CD4-positive, alpha-beta memory T cell (primary cell): ENCODE measurements at regions of chr4 and their contacts with region 1.

Region 1: GRCh38 chr4:2934813-2935761 is 28.1 kb downstream of the NOP14 start:
- DNase-seq: peak; percentile 91 to 96 (median 94)
- H3K4me3 ChIP-seq: peak overlapping the region; percentile 91 to 92
- H3K4me3 Mint-ChIP-seq: peak overlapping the region; percentile 88 to 92 (median 89)
- H3K27ac ChIP-seq: peak overlapping the region; percentile 97
- H3K27ac Mint-ChIP-seq: peak overlapping the region; percentile 91 to 99 (median 95)
- H3K4me1 ChIP-seq: peaks cover 56% of the 10 kb centered on the region
- H3K4me1 Mint-ChIP-seq: peaks cover 35 to 62% (median 45%) of the 10 kb centered on the region in 4 donors
- H3K27me3 ChIP-seq: no peaks in the 10 kb centered on the region
- H3K27me3 Mint-ChIP-seq: no peaks in the 10 kb centered on the region

Region 2: GRCh38 chr4:2536193-2537010 is 398.7 kb before region 1 on chr4 and contains the start of gene FAM193A:
- CTCF ChIA-PET with region 1: no interaction called
- POLR2A ChIA-PET with region 1: interaction called, 3 read pairs
- intact Hi-C with region 1: loop called (anchors 10 kb)
- DNase-seq: peak; percentile 98 to 99 (median 99)
- H3K4me3 ChIP-seq: peak within 1 kb of the TSS; percentile 52 to 70
- H3K4me3 Mint-ChIP-seq: peak within 1 kb of the TSS; percentile 88 to 95 (median 92)
- H3K27ac ChIP-seq: peak within 1 kb of the TSS; percentile 83
- H3K27ac Mint-ChIP-seq: peak within 1 kb of the TSS; percentile 92 to 97 (median 94)
- H3K4me1 ChIP-seq: peaks cover 37% of the 10 kb centered on the region
- H3K4me1 Mint-ChIP-seq: peaks cover 10 to 44% (median 16%) of the 10 kb centered on the region in 4 donors
- H3K27me3 ChIP-seq: no peaks in the 10 kb centered on the region
- H3K27me3 Mint-ChIP-seq: no peaks in the 10 kb centered on the region
- total RNA-seq, gene FAM193A: 47.8 TPM

Region 3: GRCh38 chr4:2755837-2756694 is 179.0 kb before region 1 on chr4 and contains the start of gene TNIP2:
- CTCF ChIA-PET with region 1: interaction called, 3 read pairs
- POLR2A ChIA-PET with region 1: interaction called, 11 read pairs
- intact Hi-C with region 1: no loop called
- DNase-seq: peak; percentile 77 to 85 (median 81)
- H3K4me3 ChIP-seq: peak within 1 kb of the TSS; percentile 25 to 68
- H3K4me3 Mint-ChIP-seq: peak within 1 kb of the TSS; percentile 75 to 89 (median 86)
- H3K27ac ChIP-seq: peak within 1 kb of the TSS; percentile 83
- H3K27ac Mint-ChIP-seq: peak within 1 kb of the TSS; percentile 68 to 93 (median 85)
- H3K4me1 ChIP-seq: peaks cover 25% of the 10 kb centered on the region
- H3K4me1 Mint-ChIP-seq: peaks cover 18 to 39% (median 29%) of the 10 kb centered on the region in 4 donors
- H3K27me3 ChIP-seq: no peaks in the 10 kb centered on the region
- H3K27me3 Mint-ChIP-seq: no peaks in the 10 kb centered on the region
- total RNA-seq, gene TNIP2: 50.0 to 50.5 TPM

Region 4: GRCh38 chr4:2800691-2801596 is 134.1 kb before region 1 on chr4:
- CTCF ChIA-PET with region 1: no interaction called
- POLR2A ChIA-PET with region 1: interaction called, 15 read pairs
- intact Hi-C with region 1: no loop called
- DNase-seq: peak in 1 of 5 donors; percentile 29
- H3K4me3 ChIP-seq: no peak overlapping the region
- H3K4me3 Mint-ChIP-seq: peak overlapping the region; percentile 18 to 73 (median 55)
- H3K27ac ChIP-seq: peak overlapping the region; percentile 74
- H3K27ac Mint-ChIP-seq: peak overlapping the region in 6 of 7 donors; percentile 48 to 91 (median 78)
- H3K4me1 ChIP-seq: peaks cover 48% of the 10 kb centered on the region
- H3K4me1 Mint-ChIP-seq: peaks cover 19 to 54% (median 31%) of the 10 kb centered on the region in 4 donors
- H3K27me3 ChIP-seq: no peaks in the 10 kb centered on the region
- H3K27me3 Mint-ChIP-seq: no peaks in the 10 kb centered on the region

Region 5: GRCh38 chr4:2923141-2923551 is 11.9 kb before region 1 on chr4:
- CTCF ChIA-PET with region 1: no interaction called
- POLR2A ChIA-PET with region 1: interaction called, 29 read pairs
- intact Hi-C with region 1: no loop called
- DNase-seq: no peak
- H3K4me3 ChIP-seq: no peak overlapping the region
- H3K4me3 Mint-ChIP-seq: peak overlapping the region in 6 of 8 donors; percentile 5 to 75 (median 50)
- H3K27ac ChIP-seq: peak overlapping the region; percentile 41
- H3K27ac Mint-ChIP-seq: peak overlapping the region; percentile 32 to 92 (median 78)
- H3K4me1 ChIP-seq: peaks cover 21% of the 10 kb centered on the region
- H3K4me1 Mint-ChIP-seq: peaks cover 28 to 53% (median 42%) of the 10 kb centered on the region in 4 donors
- H3K27me3 ChIP-seq: no peaks in the 10 kb centered on the region
- H3K27me3 Mint-ChIP-seq: no peaks in the 10 kb centered on the region